Activated CD4-positive, alpha-beta T cell treated with anti-CD3 and anti-CD28 coated beads for 36 hours (primary cell): ENCODE measurements at regions of chr20 and their contacts with region 1.

Region 1: DNA sequence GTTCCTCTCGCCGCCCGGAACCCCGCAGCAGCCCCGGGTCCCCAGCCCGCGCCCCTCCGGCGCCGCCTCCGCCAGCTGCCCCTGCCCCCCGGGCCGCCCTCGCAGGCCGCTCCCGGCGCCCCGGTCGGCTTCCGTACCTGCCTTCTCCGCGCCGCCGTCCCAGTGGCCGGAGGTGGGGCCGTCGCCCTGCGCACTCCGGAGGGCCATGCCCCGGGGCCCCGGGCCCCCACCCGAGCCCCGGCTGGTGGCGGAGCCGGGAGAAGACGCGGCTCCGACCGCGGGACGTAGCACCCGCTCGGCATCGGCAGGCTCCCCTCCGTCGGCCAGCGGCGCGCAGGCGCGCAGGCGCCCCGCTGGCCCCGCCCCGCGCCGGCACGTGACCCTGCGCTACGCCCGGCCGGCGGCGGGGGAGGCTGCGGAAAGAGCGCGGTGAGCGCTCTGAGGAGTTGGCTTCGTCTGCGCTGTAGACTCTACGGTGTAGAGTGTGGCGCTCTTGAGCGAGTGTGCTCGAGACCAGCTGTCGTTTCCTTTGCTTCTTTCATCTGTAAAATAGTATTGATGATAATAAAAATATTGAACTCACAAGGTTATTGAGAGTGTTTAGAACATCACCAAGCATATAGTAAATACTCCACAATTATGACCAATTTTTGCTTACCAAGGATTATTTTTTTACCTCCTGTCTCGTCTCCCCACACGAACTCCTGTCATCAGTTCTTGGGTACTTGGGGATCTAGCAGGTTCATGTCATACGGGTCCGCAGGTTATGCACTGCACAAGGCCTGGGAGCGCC is at the start of gene TBC1D20:
- DNase-seq: peak; percentile 92
- ATAC-seq: peak; percentile 97
- H3K4me3 Mint-ChIP-seq: peak within 1 kb of the TSS; percentile 95
- H3K27ac Mint-ChIP-seq: peak within 1 kb of the TSS; percentile 94
- H3K4me1 Mint-ChIP-seq: peaks cover 42% of the 10 kb centered on the region
- H3K27me3 Mint-ChIP-seq: no peaks in the 10 kb centered on the region
- total RNA-seq, gene TBC1D20: 20.9 to 25.2 TPM

Region 2: DNA sequence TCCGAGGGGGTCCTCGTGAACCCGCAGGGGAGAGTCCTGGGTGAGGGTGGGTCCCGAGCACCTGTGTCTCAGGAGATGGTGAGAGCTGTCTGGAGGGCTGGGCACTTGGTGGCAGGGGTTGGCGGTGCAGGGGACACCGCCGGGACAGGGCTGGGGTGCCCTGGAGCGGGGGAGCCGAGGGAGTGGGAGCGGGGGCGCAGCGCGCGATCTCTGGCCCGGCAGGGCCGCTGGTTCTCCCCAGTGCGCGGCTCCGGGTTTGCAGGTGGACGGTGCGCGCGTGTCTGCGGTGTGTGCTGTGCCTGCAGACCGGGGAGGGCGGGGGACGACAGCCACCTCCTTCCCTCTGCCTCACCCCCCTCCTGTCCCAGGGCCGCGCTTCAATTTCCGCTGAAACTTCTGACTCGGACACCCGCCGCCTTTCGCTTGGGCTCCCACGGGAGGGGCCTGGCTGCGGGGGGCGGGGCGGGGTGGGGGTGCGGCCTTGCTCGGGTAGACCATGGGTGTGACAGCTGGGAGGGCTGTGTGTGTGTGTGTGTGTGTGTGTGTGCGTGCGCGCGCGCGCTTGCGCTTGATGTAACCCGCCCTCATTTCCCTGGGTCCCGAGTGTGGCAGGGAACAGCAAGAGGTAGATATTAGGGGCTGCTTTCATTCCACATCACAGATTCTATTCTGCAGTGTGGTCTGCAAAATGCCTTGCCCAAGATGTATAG is 80.7 kb before region 1 on chr20:
- CTCF ChIA-PET with region 1: interaction called, 4 read pairs
- POLR2A ChIA-PET with region 1: no interaction called
- intact Hi-C with region 1: loop called in 1 of 2 experiments (anchors 1 kb)
- DNase-seq: peak; percentile 88
- ATAC-seq: peak; percentile 70
- H3K4me3 Mint-ChIP-seq: peak overlapping the region; percentile 81
- H3K27ac Mint-ChIP-seq: peak overlapping the region; percentile 83
- H3K4me1 Mint-ChIP-seq: peaks cover 14% of the 10 kb centered on the region
- H3K27me3 Mint-ChIP-seq: no peaks in the 10 kb centered on the region

Region 3: GRCh38 chr20:438571-439469 is 23.6 kb before region 1 on chr20:
- CTCF ChIA-PET with region 1: interaction called, 5 read pairs
- POLR2A ChIA-PET with region 1: no interaction called
- intact Hi-C with region 1: loop called (anchors 1 kb)
- DNase-seq: peak; percentile 71
- ATAC-seq: peak; percentile 78
- H3K4me3 Mint-ChIP-seq: peak overlapping the region; percentile 60
- H3K27ac Mint-ChIP-seq: peak overlapping the region; percentile 88
- H3K4me1 Mint-ChIP-seq: peaks cover 58% of the 10 kb centered on the region
- H3K27me3 Mint-ChIP-seq: no peaks in the 10 kb centered on the region

Region 4: DNA sequence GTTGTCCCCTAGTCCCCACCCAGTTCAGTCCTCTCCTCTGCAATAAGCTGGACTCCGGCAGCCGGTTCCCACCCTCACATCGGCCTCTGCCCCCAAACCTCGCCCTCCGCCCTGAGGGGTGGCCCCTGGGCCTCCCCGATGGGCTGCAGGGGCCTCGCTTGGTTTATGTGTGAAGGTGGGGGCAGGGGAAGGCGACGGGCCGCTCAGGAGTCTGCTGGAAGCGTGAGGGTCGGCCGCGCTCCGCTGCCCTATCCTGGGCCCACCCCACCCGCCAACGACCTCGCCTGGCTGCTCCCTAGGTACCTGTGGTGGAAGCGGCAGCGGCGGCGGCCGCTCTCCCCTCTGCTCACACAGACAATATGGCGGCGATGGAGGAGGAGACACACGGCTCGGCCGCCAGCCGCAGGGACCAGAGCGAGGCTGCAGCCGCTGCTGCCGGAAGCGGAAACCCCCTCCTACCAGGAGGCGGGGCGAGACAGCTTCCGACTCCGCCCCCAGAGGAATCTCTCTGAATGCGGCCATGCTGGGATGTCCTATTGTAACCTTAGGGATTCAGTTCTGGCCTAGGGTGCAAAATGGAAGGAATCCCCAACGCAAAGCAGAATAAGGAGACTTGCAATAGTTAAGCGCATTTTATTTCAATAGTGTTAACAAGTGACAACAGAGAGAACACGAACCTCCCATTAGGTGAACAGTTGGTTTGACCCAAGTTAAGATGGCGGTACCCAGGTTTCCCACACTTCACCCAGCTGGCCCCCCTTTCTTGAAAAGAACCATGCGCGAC is 81.2 kb after region 1 on chr20 and contains the start of gene CSNK2A1:
- CTCF ChIA-PET with region 1: no interaction called
- POLR2A ChIA-PET with region 1: interaction called, 3 read pairs
- intact Hi-C with region 1: loop called in 1 of 2 experiments (anchors 1 kb)
- DNase-seq: peak; percentile 97
- ATAC-seq: peak; percentile 97
- H3K4me3 Mint-ChIP-seq: peak within 1 kb of the TSS; percentile 94
- H3K27ac Mint-ChIP-seq: peak within 1 kb of the TSS; percentile 96
- H3K4me1 Mint-ChIP-seq: peaks cover 49% of the 10 kb centered on the region
- H3K27me3 Mint-ChIP-seq: no peaks in the 10 kb centered on the region
- total RNA-seq, gene CSNK2A1: 179 to 254 TPM